Endothelial cell of umbilical vein (primary cell): ENCODE measurements at regions of chr6 and their contacts with region 1.

Region 1: GRCh38 chr6:132530293-132530974 is 7.6 kb upstream of the TAAR9 start:
- DNase-seq: peak; percentile 58
- H3K4me3 ChIP-seq: no peak overlapping the region
- H3K27ac ChIP-seq: no peak overlapping the region
- H3K4me1 ChIP-seq: no peaks in the 10 kb centered on the region
- H3K27me3 ChIP-seq: peaks cover 6 to 12% of the 10 kb centered on the region in 2 experiments
- CTCF ChIP-seq: peak; percentile 60 to 63
- POLR2A ChIP-seq: no peak

Region 2: DNA sequence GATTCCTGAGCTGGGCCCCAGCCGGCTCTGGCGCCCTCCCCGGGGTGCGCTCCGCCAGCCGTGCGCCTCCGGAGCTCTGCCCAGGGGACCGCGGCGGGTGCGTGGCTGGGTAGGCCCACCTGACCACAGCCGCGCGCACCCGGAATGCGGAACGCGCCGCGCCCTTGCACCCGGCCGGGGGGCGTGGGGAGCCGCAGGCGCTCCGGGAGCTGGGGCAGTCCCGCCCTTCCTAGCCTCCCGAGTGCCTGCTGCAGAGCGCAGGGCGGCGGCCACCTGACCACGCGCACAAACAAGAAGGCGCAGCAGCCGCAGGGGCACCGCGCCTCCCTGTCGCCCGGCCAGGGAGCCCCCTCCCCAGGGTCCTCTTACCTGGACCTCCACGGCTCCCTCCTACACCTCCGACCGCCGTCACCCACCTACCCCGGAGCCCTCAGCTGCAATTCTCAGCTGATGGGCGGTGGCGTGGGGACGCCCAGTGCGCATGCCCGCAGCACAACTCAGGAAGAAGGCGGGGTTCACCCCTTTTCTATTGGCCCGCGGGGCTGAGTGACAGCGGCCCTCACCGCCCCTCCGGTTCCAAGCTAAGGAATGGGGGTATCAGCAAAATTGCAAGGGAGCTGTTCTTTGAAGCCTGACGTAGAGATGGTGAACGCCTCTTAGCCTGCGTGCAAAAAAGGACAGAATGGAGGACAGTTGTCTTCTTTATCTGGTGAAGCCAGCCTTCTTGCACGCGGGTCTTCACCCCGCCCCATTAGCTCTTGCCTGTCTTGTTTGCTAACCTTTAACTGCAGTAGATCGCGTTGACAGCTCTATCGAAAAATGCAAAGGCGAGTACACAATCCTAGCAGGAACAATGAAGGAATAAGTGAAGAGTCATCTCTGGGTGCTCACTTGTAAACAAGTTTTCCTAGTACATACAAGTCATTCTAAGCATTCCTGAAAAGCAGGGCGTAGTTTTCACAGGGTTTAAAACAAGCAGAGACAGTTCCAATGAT is 17.5 kb before region 1 on chr6 and contains the start of gene STX7:
- CTCF ChIA-PET with region 1: interaction called, 45 read pairs
- POLR2A ChIA-PET with region 1: no interaction called
- dilution Hi-C with region 1: no loop called
- intact Hi-C with region 1: no loop called
- DNase-seq: peak; percentile 92
- H3K4me3 ChIP-seq: peak within 1 kb of the TSS; percentile 73 to 99 (median 98)
- H3K27ac ChIP-seq: peak within 1 kb of the TSS; percentile 63
- H3K4me1 ChIP-seq: peaks cover 26% of the 10 kb centered on the region
- H3K27me3 ChIP-seq: peaks cover 6 to 23% of the 10 kb centered on the region in 2 experiments
- CTCF ChIP-seq: no peak
- POLR2A ChIP-seq: peak; percentile 93
- total RNA-seq, gene STX7: 42.5 and 45.5 TPM in 2 replicates

Region 3: GRCh38 chr6:132669690-132670291 is 139.4 kb after region 1 on chr6:
- CTCF ChIA-PET with region 1: interaction called, 4 read pairs
- POLR2A ChIA-PET with region 1: no interaction called
- dilution Hi-C with region 1: no loop called
- intact Hi-C with region 1: loop called (anchors 5 kb)
- DNase-seq: peak; percentile 56
- H3K4me3 ChIP-seq: no peak overlapping the region
- H3K27ac ChIP-seq: no peak overlapping the region
- H3K4me1 ChIP-seq: peaks cover 2% of the 10 kb centered on the region
- H3K27me3 ChIP-seq: no peaks in the 10 kb centered on the region
- CTCF ChIP-seq: peak in 1 of 2 donors; percentile 18
- POLR2A ChIP-seq: no peak

Region 4: DNA sequence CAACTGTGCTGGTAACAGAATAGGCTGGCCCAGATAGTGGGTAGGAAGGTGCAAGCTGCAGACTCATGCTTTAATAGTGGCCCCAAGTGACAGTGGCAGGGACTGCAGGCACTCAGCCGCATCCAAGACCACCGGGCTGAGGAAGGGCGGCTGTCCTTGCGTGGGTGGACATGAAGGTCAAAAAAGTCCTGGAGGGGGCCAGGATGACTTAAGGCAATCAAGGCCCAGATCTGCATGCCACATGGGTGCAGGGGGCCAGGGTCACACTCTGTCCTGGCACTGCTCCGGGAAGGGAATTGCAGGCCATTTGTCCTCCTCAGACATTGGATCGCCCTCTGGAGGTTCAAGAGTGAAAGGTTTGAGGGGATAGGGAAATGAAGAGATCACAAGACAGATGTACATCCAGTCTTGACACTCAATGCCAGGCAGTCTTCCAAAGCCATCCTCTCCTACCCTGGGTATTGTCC is 237.7 kb after region 1 on chr6:
- CTCF ChIA-PET with region 1: interaction called, 4 read pairs
- POLR2A ChIA-PET with region 1: no interaction called
- dilution Hi-C with region 1: no loop called
- intact Hi-C with region 1: loop called (anchors 1 kb)
- DNase-seq: peak; percentile 32
- H3K4me3 ChIP-seq: no peak overlapping the region
- H3K27ac ChIP-seq: no peak overlapping the region
- H3K4me1 ChIP-seq: no peaks in the 10 kb centered on the region
- H3K27me3 ChIP-seq: peaks cover 0 to 3% of the 10 kb centered on the region in 2 experiments
- CTCF ChIP-seq: peak; percentile 16 to 21
- POLR2A ChIP-seq: no peak

Region 5: GRCh38 chr6:132813173-132813856 is 282.9 kb after region 1 on chr6:
- CTCF ChIA-PET with region 1: interaction called, 5 read pairs
- POLR2A ChIA-PET with region 1: no interaction called
- dilution Hi-C with region 1: no loop called
- intact Hi-C with region 1: loop called (anchors 5 kb)
- DNase-seq: peak; percentile 75
- H3K4me3 ChIP-seq: peak overlapping the region; percentile 47 to 80 (median 55)
- H3K27ac ChIP-seq: peak overlapping the region; percentile 63
- H3K4me1 ChIP-seq: peaks cover 24% of the 10 kb centered on the region
- H3K27me3 ChIP-seq: peaks cover 4 to 5% of the 10 kb centered on the region in 2 experiments
- CTCF ChIP-seq: no peak
- POLR2A ChIP-seq: peak; percentile 38

Region 6: GRCh38 chr6:132962936-132963868 is 432.8 kb after region 1 on chr6:
- CTCF ChIA-PET with region 1: interaction called, 16 read pairs
- POLR2A ChIA-PET with region 1: no interaction called
- dilution Hi-C with region 1: no loop called
- intact Hi-C with region 1: loop called (anchors 5 kb)
- DNase-seq: peak; percentile 82
- H3K4me3 ChIP-seq: no peak overlapping the region
- H3K27ac ChIP-seq: no peak overlapping the region
- H3K4me1 ChIP-seq: peaks cover 20% of the 10 kb centered on the region
- H3K27me3 ChIP-seq: peaks cover 4 to 6% of the 10 kb centered on the region in 2 experiments
- CTCF ChIP-seq: peak; percentile 71 to 75
- POLR2A ChIP-seq: no peak

Region 7: DNA sequence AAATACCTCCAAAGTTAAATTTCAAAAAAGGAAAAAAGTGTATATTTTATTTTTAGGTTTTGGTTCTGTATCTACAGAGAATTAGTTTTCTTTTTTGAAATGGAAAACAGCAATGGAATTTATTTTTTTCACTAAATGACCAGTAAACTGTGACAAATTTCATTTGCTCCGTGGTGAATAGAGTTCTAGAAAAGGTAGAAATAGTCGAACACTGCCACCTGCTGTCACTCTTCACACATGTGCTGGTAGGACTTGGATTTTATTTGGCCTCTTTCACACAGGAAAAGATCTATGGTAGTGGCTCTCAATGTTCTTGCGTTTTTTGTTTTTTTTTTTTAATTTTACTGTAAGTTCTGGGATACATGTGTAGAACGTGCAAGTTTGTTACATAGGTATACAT is 1023.2 kb after region 1 on chr6:
- CTCF ChIA-PET with region 1: interaction called, 6 read pairs
- POLR2A ChIA-PET with region 1: no interaction called
- dilution Hi-C with region 1: no loop called
- intact Hi-C with region 1: loop called (anchors 1 kb)
- DNase-seq: peak; percentile 44
- H3K4me3 ChIP-seq: no peak overlapping the region
- H3K27ac ChIP-seq: no peak overlapping the region
- H3K4me1 ChIP-seq: no peaks in the 10 kb centered on the region
- H3K27me3 ChIP-seq: peaks cover 2 to 4% of the 10 kb centered on the region in 2 experiments
- CTCF ChIP-seq: peak; percentile 23 to 37
- POLR2A ChIP-seq: no peak